ENCODE measurements at regions of chr2 and their contacts with region 1.

Region 1: DNA sequence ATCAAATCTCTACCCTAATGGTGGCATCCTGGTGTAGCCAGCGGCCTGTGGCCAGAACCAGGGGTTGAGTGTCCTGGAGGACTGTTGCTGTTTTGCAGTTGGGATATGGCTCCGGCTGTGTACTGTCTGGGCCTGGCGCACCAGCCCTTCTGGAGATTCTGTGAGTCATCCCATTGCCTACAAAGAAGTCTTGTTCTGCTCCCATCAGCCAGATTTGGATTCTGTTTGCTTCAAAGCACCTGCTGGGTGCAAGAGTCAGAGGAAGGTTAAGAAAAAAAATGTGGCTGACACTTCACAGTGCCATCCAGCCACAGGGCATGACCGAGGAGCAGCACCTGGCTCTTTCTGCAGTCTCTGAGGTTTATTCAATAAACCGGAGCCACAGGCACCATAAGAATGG is 41.0 kb upstream of the ASAP2 start:
- DNase-seq: peak; percentile 68
- ATAC-seq: peak; percentile 18
- H3K4me3 ChIP-seq: no peak overlapping the region
- H3K27ac ChIP-seq: no peak overlapping the region
- H3K4me1 ChIP-seq: peaks cover 54% of the 10 kb centered on the region
- H3K27me3 ChIP-seq: peaks cover 0 to 17% of the 10 kb centered on the region in 2 experiments; a peak in 2 of 5 replicates
- CTCF ChIP-seq: no peak
- EP300 ChIP-seq: no peak; a peak in 1 of 4 replicates
- POLR2A ChIP-seq: no peak
- RAD21 ChIP-seq: no peak

Region 2: DNA sequence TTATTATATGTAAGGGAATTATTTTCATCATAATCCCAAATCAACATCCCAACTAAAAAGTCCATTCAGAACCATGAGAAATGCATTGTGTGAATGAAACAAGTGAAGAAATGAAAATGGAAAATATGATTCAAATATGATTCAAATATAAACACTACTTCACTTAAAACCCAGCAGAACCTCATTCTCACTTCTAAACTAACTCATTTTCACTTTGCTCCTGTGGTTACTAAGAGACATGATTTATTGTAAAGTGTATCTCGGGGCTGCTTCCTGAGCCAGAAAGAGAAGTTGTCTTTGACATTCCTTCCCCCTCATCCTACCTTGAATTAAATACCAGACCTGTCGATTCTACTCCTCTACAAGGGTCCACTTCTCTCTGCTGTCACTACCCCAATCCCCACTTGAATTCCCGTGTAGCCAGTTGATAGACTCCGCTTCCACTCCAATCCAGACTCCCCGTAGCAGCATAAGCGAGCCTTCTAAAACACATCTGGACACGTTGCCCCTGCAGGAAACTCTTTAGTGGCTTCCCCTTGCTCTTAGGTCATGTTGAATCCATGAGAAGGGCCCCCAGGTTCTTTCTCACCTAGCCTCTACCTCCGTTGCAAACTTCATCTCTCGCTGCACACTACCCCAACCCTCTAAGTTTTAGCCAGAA is 1180.8 kb before region 1 on chr2:
- CTCF ChIA-PET with region 1: no interaction called
- POLR2A ChIA-PET with region 1: no interaction called
- in situ Hi-C with region 1: no loop called
- intact Hi-C with region 1: no loop called
- DNase-seq: no peak
- ATAC-seq: no peak
- H3K4me3 ChIP-seq: no peak overlapping the region
- H3K27ac ChIP-seq: no peak overlapping the region
- H3K4me1 ChIP-seq: no peaks in the 10 kb centered on the region
- H3K27me3 ChIP-seq: no peaks in the 10 kb centered on the region
- CTCF ChIP-seq: no peak
- EP300 ChIP-seq: no peak
- POLR2A ChIP-seq: no peak
- RAD21 ChIP-seq: no peak

Region 3: GRCh38 chr2:8408560-8409460 is 756.8 kb before region 1 on chr2:
- CTCF ChIA-PET with region 1: no interaction called
- POLR2A ChIA-PET with region 1: no interaction called
- in situ Hi-C with region 1: no loop called
- intact Hi-C with region 1: no loop called
- DNase-seq: no peak
- ATAC-seq: no peak
- H3K4me3 ChIP-seq: no peak overlapping the region
- H3K27ac ChIP-seq: no peak overlapping the region
- H3K4me1 ChIP-seq: peaks cover 45% of the 10 kb centered on the region
- H3K27me3 ChIP-seq: no peaks in the 10 kb centered on the region; a peak in 1 of 5 replicates
- CTCF ChIP-seq: no peak
- EP300 ChIP-seq: no peak
- POLR2A ChIP-seq: no peak
- RAD21 ChIP-seq: no peak

Region 4: DNA sequence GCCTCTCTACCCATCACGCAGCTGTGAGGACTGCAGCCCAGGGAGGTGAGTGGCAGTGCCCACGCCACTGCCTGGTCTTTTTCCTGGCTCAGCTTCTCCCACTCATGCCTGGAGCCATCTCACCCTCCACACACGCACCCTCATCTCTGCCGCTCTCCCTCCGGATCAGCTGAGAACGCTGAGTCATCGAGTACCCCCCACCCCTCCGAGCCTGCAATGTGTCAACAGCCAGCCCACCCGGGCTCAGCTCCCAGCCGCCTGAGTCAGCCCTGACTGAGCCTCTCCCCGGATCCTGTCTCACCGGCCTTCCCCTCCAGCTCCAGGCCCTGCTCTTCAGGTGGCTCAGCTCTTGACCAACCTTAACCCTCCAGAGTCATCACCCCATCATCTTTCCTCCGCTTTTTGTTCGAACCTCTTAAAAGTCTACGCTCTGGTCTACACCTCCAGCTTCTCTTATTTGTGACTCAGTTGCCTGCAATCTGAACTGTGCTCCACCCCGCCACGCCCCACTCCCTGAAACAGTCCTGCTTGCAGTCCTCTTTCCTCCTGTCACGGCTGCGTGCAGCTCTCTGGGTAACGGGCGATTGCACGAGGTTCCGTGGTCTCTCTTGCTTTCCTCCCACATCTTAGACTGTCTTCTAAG is 53.4 kb before region 1 on chr2:
- CTCF ChIA-PET with region 1: no interaction called
- POLR2A ChIA-PET with region 1: no interaction called
- in situ Hi-C with region 1: no loop called
- intact Hi-C with region 1: no loop called
- DNase-seq: no peak
- ATAC-seq: peak; percentile 20; the same call in 2 of the 3 replicates
- H3K4me3 ChIP-seq: no peak overlapping the region
- H3K27ac ChIP-seq: no peak overlapping the region
- H3K4me1 ChIP-seq: peaks cover 8% of the 10 kb centered on the region; the same call in 1 of the 2 replicates
- H3K27me3 ChIP-seq: peaks cover 8 to 49% of the 10 kb centered on the region in 2 experiments; a peak in 3 of 5 replicates
- CTCF ChIP-seq: no peak
- EP300 ChIP-seq: no peak
- POLR2A ChIP-seq: no peak
- RAD21 ChIP-seq: no peak

Region 5: DNA sequence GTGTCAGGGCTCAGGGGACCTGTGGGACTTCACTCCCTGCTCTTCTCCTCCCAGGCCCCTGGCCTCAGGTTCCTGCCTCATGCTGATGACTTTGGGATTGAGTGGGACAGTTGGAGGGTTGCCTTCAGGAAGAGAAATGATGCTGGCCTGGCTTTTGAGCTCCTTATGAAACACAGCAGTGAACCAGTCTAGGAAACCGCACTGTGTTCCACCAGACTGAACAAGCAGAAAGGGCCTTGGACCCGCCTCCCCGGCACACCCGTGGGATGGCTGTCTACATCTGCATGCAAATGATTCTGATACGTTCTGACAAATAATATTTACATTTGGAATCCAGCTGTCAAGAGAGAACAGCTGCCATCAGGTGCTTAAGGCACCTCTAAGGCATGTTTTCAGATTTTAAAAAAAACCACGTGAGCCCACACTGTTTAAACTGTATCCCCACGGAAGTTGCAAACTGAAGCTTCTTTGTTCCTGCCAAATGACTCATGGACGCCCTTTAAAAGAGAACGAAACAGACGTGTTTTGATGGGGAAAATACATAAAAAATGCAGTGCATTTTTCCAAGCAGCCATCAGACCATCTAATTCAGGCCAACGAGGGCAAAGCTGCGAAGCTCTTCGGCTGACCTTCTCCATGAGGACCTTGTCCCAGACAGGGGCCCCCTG is 13.4 kb after region 1 on chr2:
- CTCF ChIA-PET with region 1: no interaction called
- POLR2A ChIA-PET with region 1: interaction called, 37 read pairs
- in situ Hi-C with region 1: no loop called
- intact Hi-C with region 1: no loop called
- DNase-seq: peak; percentile 93
- ATAC-seq: peak; percentile 86
- H3K4me3 ChIP-seq: peak overlapping the region in 1 of 3 experiments; percentile 2; a peak in 2 of 6 replicates
- H3K27ac ChIP-seq: peak overlapping the region; percentile 43
- H3K4me1 ChIP-seq: peaks cover 41% of the 10 kb centered on the region
- H3K27me3 ChIP-seq: peaks cover 2 to 24% of the 10 kb centered on the region in 2 experiments; a peak in 4 of 5 replicates
- CTCF ChIP-seq: no peak
- EP300 ChIP-seq: peak in 1 of 2 experiments; percentile 60; a peak in 1 of 4 replicates
- POLR2A ChIP-seq: no peak
- RAD21 ChIP-seq: no peak

Region 6: DNA sequence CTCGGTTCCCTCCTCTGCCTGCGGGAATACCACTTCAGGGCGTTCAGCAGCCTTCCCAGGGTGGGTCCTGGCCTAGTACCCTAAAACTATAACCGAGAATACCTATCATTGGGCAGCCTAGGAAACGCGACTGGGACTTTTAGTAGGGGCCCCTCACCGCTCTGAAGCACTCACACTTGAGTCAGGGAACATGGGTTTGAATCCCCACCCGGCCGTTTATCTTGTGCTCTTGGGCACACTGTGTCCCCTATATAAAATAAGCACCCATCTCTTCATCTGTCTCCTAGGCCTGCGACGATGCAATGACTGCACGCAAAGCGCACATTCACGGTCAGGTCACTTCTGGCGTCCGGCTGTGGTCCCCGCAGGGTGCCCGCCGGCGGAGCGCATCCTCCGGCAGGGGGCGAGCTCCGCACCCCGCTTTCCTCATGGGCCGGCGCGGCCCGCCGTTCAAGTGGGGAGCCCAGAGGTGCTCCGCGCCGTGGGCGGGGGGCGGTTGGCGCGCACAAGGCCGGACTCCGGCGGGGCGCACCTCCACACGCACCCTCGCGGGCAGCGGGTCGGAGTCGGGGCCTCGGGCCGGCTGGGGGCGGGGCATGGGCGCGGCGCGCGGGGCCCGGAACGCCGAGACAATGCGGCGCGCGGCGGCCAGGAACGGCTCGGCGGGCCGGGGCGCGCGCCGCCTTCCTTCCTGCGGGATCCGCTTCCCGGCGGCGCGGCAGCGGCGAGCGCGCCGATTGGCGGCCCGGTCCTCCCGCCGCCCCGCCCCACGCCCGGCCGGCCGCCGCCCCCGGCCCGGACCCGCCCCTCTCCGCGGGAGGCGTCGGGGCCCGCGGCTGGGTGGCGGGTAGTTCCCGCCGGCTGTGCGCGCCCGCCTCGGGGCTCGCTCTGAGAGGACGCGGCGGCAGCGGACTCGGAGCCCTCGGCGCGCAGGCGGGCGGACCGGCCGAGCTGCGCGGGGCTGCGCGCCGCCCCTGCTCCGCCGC is 40.6 kb after region 1 on chr2 and contains the start of gene ASAP2:
- CTCF ChIA-PET with region 1: no interaction called
- POLR2A ChIA-PET with region 1: interaction called, 10 read pairs
- in situ Hi-C with region 1: loop called (anchors 5 kb)
- intact Hi-C with region 1: loop called (anchors 5 kb)
- DNase-seq: peak; percentile 59
- ATAC-seq: peak; percentile 79
- H3K4me3 ChIP-seq: peak within 1 kb of the TSS; percentile 87 to 96 (median 90)
- H3K27ac ChIP-seq: peak within 1 kb of the TSS; percentile 1
- H3K4me1 ChIP-seq: peaks cover 62% of the 10 kb centered on the region
- H3K27me3 ChIP-seq: no peaks in the 10 kb centered on the region; a peak in 1 of 5 replicates
- CTCF ChIP-seq: peak; percentile 89
- EP300 ChIP-seq: no peak
- POLR2A ChIP-seq: peak in 1 of 2 experiments; percentile 31; a peak in 1 of 4 replicates
- RAD21 ChIP-seq: peak; percentile 96
- total RNA-seq, gene ASAP2: 7.3 and 7.5 TPM in 2 replicates